ENCODE measurements at regions of chr12 and their contacts with region 1.

Region 1: GRCh38 chr12:113226696-113227568 is 5.7 kb downstream of the TPCN1 start:
- DNase-seq: peak in 4 of 5 donors; percentile 63 to 77 (median 69)
- ATAC-seq: peak; percentile 45 to 62 (median 58)
- H3K4me3 ChIP-seq: no peak overlapping the region
- H3K27ac ChIP-seq: peak overlapping the region; percentile 19 to 94 (median 88)
- H3K4me1 ChIP-seq: peaks cover 11 to 93% (median 85%) of the 10 kb centered on the region in 12 donors
- H3K27me3 ChIP-seq: no peaks in the 10 kb centered on the region
- CTCF ChIP-seq: peak in 2 of 12 donors; percentile 14 to 27
- POLR2A ChIP-seq: no peak

Region 2: DNA sequence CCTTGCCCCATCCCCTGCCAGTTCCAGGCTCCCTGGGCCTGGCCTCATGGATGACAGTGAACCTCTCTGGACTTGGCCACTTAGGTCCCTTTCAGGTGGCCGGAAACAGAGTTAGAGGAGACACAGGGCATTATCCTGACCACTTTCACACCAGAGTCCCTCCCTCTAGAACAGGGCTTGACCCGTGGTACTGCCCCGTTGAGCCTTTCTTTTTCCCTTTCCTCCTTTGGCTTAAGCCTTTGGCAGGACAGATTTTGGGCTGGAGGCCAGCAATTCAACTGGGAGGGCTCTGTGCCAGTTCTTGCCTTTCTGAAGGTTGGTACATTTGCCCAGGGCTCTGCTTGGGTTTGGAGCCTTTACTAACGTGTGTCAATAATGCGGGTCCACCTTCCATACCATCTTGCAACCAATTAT is 17.1 kb after region 1 on chr12:
- intact Hi-C with region 1: loop called in 2 of 10 experiments (anchors 1 to 2 kb)
- DNase-seq: peak; percentile 71 to 83 (median 76)
- ATAC-seq: peak; percentile 11 to 47 (median 29)
- H3K4me3 ChIP-seq: peak overlapping the region in 9 of 12 donors; percentile 11 to 49 (median 33)
- H3K27ac ChIP-seq: peak overlapping the region; percentile 74 to 94 (median 88)
- H3K4me1 ChIP-seq: peaks cover 14 to 95% (median 80%) of the 10 kb centered on the region in 12 donors
- H3K27me3 ChIP-seq: no peaks in the 10 kb centered on the region
- CTCF ChIP-seq: no peak
- POLR2A ChIP-seq: no peak

Region 3: DNA sequence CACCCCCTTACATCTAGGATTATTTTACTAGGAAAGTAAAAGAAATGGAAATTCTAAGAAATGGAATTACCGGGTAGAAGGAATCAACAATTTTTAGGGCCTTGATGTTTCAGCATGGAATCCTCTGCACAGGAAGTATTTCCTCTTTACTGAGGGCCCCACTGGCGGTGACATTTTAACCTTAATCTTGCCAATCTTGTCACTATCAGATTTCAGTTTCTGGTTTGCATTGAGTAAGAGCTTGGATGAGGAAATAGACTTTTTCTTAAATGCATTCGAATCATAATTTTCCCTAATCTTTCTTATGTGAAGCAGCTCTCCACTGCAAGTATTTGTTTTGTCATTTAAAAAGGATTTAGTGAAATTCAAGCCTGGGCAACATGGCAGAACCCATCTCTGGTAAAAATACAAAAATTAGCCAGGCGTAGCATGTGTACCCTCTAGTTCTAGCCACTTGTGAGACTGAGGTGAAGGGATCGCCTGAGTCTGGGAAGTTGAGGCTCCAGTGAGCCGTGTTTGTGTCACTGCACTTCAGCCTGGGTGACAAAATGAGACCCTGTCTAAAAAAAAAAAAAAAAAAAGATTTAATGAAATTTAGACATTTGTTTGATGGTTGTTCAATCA is 35.0 kb after region 1 on chr12:
- intact Hi-C with region 1: loop called in 4 of 10 experiments (anchors 2 to 5 kb)
- DNase-seq: no peak
- ATAC-seq: no peak
- H3K4me3 ChIP-seq: no peak overlapping the region
- H3K27ac ChIP-seq: peak overlapping the region in 10 of 12 donors; percentile 6 to 81 (median 70)
- H3K4me1 ChIP-seq: peaks cover 10 to 57% (median 39%) of the 10 kb centered on the region in 12 donors
- H3K27me3 ChIP-seq: no peaks in the 10 kb centered on the region
- CTCF ChIP-seq: no peak
- POLR2A ChIP-seq: no peak

Region 4: GRCh38 chr12:113299619-113300237 is 72.8 kb after region 1 on chr12:
- intact Hi-C with region 1: loop called in 3 of 10 experiments (anchors 5 kb)
- DNase-seq: peak; percentile 57 to 86 (median 82)
- ATAC-seq: peak; percentile 17 to 75 (median 54)
- H3K4me3 ChIP-seq: no peak overlapping the region
- H3K27ac ChIP-seq: peak overlapping the region; percentile 70 to 91 (median 84)
- H3K4me1 ChIP-seq: peaks cover 0 to 53% (median 31%) of the 10 kb centered on the region in 12 donors
- H3K27me3 ChIP-seq: no peaks in the 10 kb centered on the region
- CTCF ChIP-seq: no peak
- POLR2A ChIP-seq: no peak

Measured in heart left ventricle (tissue), 16 donors.